ENCODE measurements at regions of chr15 and their contacts with region 1.

Region 1: GRCh38 chr15:70806992-70807712 is 43.8 kb upstream of the UACA start:
- DNase-seq: no peak
- ATAC-seq: no peak
- H3K4me3 ChIP-seq: no peak overlapping the region
- H3K27ac ChIP-seq: peak overlapping the region in 1 of 2 experiments; percentile 41; a peak in 3 of 6 replicates
- H3K4me1 ChIP-seq: peaks cover 22% of the 10 kb centered on the region
- CTCF ChIP-seq: no peak
- EP300 ChIP-seq: no peak
- POLR2A ChIP-seq: no peak
- RAD21 ChIP-seq: no peak

Region 2: GRCh38 chr15:70701891-70702568 is 105.1 kb before region 1 on chr15:
- CTCF ChIA-PET with region 1: interaction called, 17 read pairs
- POLR2A ChIA-PET with region 1: no interaction called
- DNase-seq: peak; percentile 37 to 50
- ATAC-seq: peak; percentile 73 to 91
- H3K4me3 ChIP-seq: no peak overlapping the region
- H3K27ac ChIP-seq: peak overlapping the region; percentile 22 to 61; a peak in 5 of 6 replicates
- H3K4me1 ChIP-seq: peaks cover 62% of the 10 kb centered on the region
- CTCF ChIP-seq: no peak
- EP300 ChIP-seq: no peak
- POLR2A ChIP-seq: no peak
- RAD21 ChIP-seq: no peak

Region 3: DNA sequence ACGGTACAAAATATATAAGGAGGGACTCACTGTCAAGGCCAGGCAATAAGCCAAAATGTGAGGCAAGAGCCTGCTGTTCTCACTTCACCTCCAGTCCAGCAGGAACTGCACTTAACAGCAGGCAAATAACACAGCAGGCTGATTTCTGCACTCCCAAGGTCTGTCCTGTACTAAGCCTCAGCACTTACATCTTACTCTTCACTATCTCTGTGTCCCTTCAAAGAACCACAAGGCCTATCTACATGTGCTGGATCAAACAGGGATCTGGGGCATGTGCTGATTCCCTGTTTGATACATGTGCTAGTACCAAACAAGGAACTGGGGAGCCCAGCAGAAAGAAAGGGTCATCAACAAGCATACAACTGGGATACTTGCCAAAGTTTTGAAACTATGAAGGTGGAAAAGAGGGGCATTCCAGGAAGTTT is 66.0 kb before region 1 on chr15:
- CTCF ChIA-PET with region 1: interaction called, 29 read pairs
- POLR2A ChIA-PET with region 1: no interaction called
- DNase-seq: peak; percentile 55 to 76
- ATAC-seq: peak; percentile 81 to 83
- H3K4me3 ChIP-seq: no peak overlapping the region
- H3K27ac ChIP-seq: peak overlapping the region; percentile 63 to 80
- H3K4me1 ChIP-seq: peaks cover 42% of the 10 kb centered on the region
- CTCF ChIP-seq: no peak
- EP300 ChIP-seq: no peak
- POLR2A ChIP-seq: no peak
- RAD21 ChIP-seq: no peak

Region 4: DNA sequence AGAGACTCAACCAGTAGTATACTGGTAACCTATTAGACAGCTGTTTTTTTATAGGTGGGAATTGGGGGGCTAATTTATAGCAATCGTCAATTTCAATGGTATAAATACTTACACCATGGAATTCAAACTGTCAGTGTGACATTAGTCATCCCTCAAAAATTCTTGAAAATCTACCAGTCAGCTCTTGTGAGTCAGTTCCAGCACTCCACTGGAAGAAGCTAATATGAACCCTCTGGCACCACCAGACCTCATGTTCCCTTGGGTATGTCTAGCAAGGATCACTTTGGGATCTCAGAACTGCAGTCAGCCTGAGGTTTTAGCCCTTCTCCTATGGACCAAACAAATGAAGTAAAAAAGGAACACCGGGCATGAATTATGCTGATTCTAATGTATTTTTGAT is 32.0 kb before region 1 on chr15:
- CTCF ChIA-PET with region 1: interaction called, 36 read pairs
- POLR2A ChIA-PET with region 1: no interaction called
- DNase-seq: peak; percentile 36 to 53
- ATAC-seq: peak in 1 of 2 experiments; percentile 54; a peak in 3 of 6 replicates
- H3K4me3 ChIP-seq: no peak overlapping the region
- H3K27ac ChIP-seq: peak overlapping the region; percentile 2 to 55; a peak in 2 of 6 replicates
- H3K4me1 ChIP-seq: peaks cover 42% of the 10 kb centered on the region
- CTCF ChIP-seq: no peak
- EP300 ChIP-seq: no peak
- POLR2A ChIP-seq: no peak
- RAD21 ChIP-seq: no peak

Region 5: DNA sequence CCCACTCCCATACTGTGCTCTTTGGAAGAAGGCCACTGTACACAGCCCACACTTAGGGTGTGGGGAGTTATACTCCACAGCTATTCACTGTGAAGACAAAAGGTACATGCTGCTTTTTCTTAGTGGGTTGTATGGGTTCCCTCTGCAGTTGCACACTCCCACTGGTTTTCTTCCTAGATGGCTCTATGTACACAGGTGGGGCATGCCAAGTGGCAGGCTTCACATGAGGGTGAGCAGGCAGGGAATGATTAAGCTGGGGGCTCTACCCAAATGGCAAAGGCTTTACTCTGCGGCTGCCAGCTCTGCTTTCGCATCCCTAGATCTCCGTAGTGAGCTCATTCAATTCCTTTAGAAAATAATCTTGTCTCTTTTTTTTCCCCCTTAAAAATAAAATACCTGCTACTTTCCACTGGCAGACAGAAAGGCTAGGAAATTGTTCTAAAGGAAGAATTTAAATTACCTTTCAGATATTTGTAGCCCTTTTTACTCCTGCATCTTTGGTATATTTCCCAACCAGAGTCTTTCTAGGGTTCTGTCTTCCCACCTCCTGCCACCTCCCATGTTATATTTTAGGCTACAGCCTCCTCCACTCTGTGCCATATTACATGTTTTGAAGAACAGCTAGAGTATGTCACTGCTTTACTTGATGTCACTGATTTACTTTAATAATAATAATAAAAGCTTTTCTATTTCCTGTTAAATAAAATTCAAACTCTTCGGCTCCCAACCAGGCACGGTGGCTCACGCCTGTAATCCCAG is 38.6 kb after region 1 on chr15:
- CTCF ChIA-PET with region 1: interaction called, 37 read pairs
- POLR2A ChIA-PET with region 1: no interaction called
- DNase-seq: no peak
- ATAC-seq: no peak
- H3K4me3 ChIP-seq: no peak overlapping the region
- H3K27ac ChIP-seq: no peak overlapping the region
- H3K4me1 ChIP-seq: no peaks in the 10 kb centered on the region
- CTCF ChIP-seq: no peak
- EP300 ChIP-seq: no peak
- POLR2A ChIP-seq: no peak
- RAD21 ChIP-seq: no peak